ENCODE measurements at regions of chr12 and their contacts with region 1.

Region 1: DNA sequence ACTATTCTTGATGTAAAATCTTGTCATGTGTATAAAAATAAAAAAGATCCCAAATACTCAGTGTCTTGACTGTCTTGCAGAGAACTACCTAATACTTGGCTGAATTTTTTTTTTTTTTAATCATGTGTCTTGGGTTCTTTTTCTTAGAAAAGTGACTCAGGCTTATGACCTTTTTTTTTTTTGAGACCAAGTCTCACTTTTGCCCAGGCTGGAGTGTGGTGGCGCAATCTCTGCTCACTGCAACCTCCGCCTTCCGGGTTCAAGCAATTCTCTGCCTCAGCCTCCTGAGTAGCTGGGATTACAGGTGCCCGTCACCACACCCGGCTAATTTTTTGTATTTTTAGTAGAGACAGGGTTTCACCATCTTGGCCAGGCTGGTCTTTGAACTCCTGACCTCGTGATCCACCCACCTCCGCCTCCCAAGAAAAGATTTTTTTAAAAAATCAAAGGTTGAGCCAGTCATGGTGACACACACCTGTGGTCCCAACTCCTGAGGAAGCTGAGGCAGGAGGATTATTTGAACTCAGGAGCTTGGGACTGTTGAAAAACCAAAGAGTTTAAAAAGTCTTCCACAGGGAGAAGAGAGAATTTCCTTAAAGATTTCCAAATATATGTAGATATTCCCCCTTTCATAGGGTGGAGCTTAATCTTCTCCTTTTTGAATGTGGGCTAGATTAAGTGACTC is 17.7 kb upstream of the TDG start:
- DNase-seq: no peak
- ATAC-seq: no peak
- H3K4me3 ChIP-seq: no peak overlapping the region
- H3K27ac ChIP-seq: no peak overlapping the region
- H3K4me1 ChIP-seq: no peaks in the 10 kb centered on the region
- H3K27me3 ChIP-seq: no peaks in the 10 kb centered on the region
- CTCF ChIP-seq: no peak
- POLR2A ChIP-seq: no peak

Region 2: GRCh38 chr12:103688376-103689063 is 259.5 kb before region 1 on chr12:
- intact Hi-C with region 1: no loop called
- DNase-seq: no peak
- ATAC-seq: no peak
- H3K4me3 ChIP-seq: no peak overlapping the region
- H3K27ac ChIP-seq: no peak overlapping the region
- H3K4me1 ChIP-seq: no peaks in the 10 kb centered on the region
- H3K27me3 ChIP-seq: peaks cover 0 to 4% (median 0%) of the 10 kb centered on the region in 9 donors
- CTCF ChIP-seq: no peak
- POLR2A ChIP-seq: no peak

Region 3: GRCh38 chr12:103986829-103987228 is 38.8 kb after region 1 on chr12:
- intact Hi-C with region 1: loop called in 2 of 10 experiments (anchors 5 kb)
- DNase-seq: no peak
- ATAC-seq: no peak
- H3K4me3 ChIP-seq: no peak overlapping the region
- H3K27ac ChIP-seq: no peak overlapping the region
- H3K4me1 ChIP-seq: no peaks in the 10 kb centered on the region
- H3K27me3 ChIP-seq: no peaks in the 10 kb centered on the region
- CTCF ChIP-seq: no peak
- POLR2A ChIP-seq: no peak

Region 4: DNA sequence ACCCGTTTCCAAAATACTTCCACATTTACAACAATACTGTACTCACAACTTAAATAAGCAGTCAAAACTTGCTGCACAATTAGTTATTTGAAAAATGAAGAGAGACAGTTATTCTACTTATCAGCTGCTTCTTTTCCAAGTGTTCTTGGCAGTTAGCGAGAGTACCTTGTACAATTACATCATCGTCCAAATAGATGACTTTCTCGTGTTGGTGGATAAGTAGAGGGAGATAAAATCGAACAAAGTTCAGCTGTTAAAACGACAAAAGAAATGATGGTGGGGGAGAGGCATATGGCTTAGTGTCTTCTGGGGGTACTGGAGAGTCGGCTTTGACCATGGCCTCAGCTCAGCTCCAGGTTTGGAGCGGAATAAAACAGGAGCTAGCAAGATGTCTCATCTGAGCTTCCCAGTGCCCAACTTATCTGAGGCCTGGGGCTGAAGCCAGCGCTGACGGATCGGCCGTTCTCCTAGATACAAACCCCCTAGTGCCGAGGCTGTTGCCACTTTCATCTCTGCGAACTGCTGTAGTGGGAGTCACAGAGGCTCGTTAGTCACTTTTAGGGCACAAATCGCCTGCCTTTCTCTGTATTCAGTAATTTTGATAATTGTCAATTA is 49.4 kb after region 1 on chr12:
- intact Hi-C with region 1: no loop called
- DNase-seq: peak; percentile 26 to 77 (median 73)
- ATAC-seq: peak; percentile 81 to 89 (median 85)
- H3K4me3 ChIP-seq: peak overlapping the region in 3 of 12 donors; percentile 15 to 31 (median 16)
- H3K27ac ChIP-seq: peak overlapping the region in 11 of 12 donors; percentile 25 to 77 (median 59)
- H3K4me1 ChIP-seq: peaks cover 0 to 14% (median 0%) of the 10 kb centered on the region in 12 donors
- H3K27me3 ChIP-seq: no peaks in the 10 kb centered on the region
- CTCF ChIP-seq: no peak
- POLR2A ChIP-seq: no peak

Region 5: DNA sequence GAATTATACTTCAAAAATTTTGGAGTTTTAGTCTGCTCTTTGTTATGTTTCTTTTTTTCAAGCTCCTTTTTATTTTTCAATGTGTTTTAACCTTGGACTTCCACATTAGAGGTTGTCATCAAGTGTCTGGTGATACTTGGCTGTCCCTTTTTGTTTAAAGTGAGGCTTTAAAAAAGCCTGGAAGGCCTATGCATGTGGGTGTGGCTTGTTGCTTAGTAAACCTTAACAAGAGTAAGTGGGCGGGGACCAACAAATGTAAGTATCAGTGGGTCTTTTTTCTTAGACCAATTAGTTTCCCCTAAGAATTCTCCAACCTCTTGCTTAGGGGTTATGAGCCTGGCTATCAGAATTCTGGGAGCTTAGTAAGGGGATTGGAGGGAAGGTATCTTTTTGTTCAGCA is 142.7 kb after region 1 on chr12:
- intact Hi-C with region 1: loop called in 3 of 10 experiments (anchors 10 kb)
- DNase-seq: no peak
- ATAC-seq: no peak
- H3K4me3 ChIP-seq: no peak overlapping the region
- H3K27ac ChIP-seq: no peak overlapping the region
- H3K4me1 ChIP-seq: no peaks in the 10 kb centered on the region
- H3K27me3 ChIP-seq: no peaks in the 10 kb centered on the region
- CTCF ChIP-seq: no peak
- POLR2A ChIP-seq: no peak

Region 6: DNA sequence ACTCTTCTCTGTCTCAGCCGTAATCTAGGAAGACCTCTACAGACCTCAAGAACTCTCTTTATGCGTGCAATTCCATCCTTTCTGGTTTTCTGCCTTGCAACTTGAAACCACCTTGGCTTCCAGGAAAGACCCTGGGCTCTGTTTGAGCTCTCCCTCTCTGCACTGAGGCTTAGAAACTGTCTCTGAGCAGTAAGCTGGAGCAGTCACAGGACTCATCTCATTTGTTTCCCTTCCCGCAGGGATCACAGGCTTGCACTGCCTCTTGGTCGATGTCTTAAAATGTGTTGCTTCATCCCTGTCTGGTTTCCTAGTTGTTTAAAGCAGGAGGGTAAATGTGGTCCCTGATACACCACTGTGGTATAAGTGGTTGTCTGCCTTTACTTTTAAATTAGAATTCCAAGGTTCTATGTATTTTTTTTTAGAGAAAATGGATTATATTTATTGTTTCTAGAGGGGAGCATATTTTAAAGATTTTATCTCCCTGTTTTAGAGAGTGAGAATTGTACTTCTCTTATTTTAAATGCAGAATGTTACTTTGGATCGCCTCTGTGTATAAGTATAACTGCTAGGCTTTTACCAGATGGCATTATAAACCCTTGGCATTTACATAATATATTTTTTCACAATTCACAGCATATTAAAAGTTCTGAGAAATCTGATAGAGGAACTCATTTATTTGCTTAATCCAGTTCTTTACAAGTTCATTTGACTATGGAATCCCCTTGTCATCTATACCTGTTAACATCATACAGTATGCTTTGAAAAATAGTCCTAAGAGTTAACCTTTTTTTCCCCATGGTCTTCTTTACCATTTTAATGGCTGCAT is 381.9 kb after region 1 on chr12:
- intact Hi-C with region 1: loop called in 2 of 10 experiments (anchors 10 kb)
- DNase-seq: no peak
- ATAC-seq: no peak
- H3K4me3 ChIP-seq: no peak overlapping the region
- H3K27ac ChIP-seq: no peak overlapping the region
- H3K4me1 ChIP-seq: no peaks in the 10 kb centered on the region
- H3K27me3 ChIP-seq: no peaks in the 10 kb centered on the region
- CTCF ChIP-seq: no peak
- POLR2A ChIP-seq: no peak

Measured in heart left ventricle (tissue), 16 donors.